ENCODE measurements at regions of chr14 and their contacts with region 1.

Region 1: DNA sequence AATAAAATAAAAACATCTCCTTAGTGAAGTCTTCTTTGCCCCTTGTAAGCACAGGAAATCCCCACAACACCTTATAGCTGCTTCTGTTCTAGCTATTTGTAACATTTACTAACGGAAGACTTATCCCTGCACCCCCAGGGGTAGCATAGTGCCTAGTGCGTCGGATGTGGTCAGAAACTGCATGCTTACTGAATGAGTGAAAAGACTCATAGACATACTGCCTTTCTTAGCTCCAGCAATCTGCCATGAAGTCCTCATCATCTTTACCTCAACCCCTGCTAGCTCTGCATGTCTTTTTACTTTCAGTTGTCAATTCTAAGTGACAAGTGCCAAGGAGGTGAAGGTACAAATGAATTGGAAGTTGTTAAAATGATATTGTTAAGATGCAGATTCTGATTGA is 12.9 kb downstream of the RIOX1 start:
- DNase-seq: no peak

Region 2: GRCh38 chr14:74038015-74038859 is 534.6 kb after region 1 on chr14:
- in situ Hi-C with region 1: loop called (anchors 25 kb)
- DNase-seq: peak; percentile 89